B cell (primary cell): ENCODE measurements at regions of chr22 and their contacts with region 1.

Region 1: GRCh38 chr22:23838681-23839468 is at the start of gene DERL3:
- DNase-seq: peak; percentile 100
- ATAC-seq: peak; percentile 78
- H3K4me3 ChIP-seq: peak within 1 kb of the TSS; percentile 38 to 83 (median 69)
- H3K4me3 Mint-ChIP-seq: peak within 1 kb of the TSS; percentile 89
- H3K27ac ChIP-seq: peak within 1 kb of the TSS; percentile 98
- H3K27ac Mint-ChIP-seq: peak within 1 kb of the TSS; percentile 99
- H3K4me1 ChIP-seq: peaks cover 45 to 60% of the 10 kb centered on the region in 2 donors
- H3K4me1 Mint-ChIP-seq: peaks cover 73% of the 10 kb centered on the region
- H3K27me3 ChIP-seq: no peaks in the 10 kb centered on the region
- H3K27me3 Mint-ChIP-seq: no peaks in the 10 kb centered on the region
- CTCF ChIP-seq: no peak
- total RNA-seq, gene DERL3: 74.1 and 77.0 TPM in 2 replicates

Region 2: GRCh38 chr22:23750714-23751440 is 88.0 kb before region 1 on chr22 and contains the start of gene ZNF70:
- CTCF ChIA-PET with region 1: interaction called, 22 read pairs
- POLR2A ChIA-PET with region 1: interaction called, 39 read pairs
- intact Hi-C with region 1: loop called (anchors 1 kb)
- DNase-seq: peak; percentile 92
- ATAC-seq: peak; percentile 56
- H3K4me3 ChIP-seq: peak within 1 kb of the TSS; percentile 6 to 88 (median 83)
- H3K4me3 Mint-ChIP-seq: peak within 1 kb of the TSS; percentile 93
- H3K27ac ChIP-seq: peak within 1 kb of the TSS; percentile 85 to 98
- H3K27ac Mint-ChIP-seq: peak within 1 kb of the TSS; percentile 99
- H3K4me1 ChIP-seq: peaks cover 24 to 53% of the 10 kb centered on the region in 2 donors
- H3K4me1 Mint-ChIP-seq: peaks cover 55% of the 10 kb centered on the region
- H3K27me3 ChIP-seq: no peaks in the 10 kb centered on the region
- H3K27me3 Mint-ChIP-seq: no peaks in the 10 kb centered on the region
- CTCF ChIP-seq: no peak
- total RNA-seq, gene ZNF70: 8.3 and 9.6 TPM in 2 replicates

Region 3: DNA sequence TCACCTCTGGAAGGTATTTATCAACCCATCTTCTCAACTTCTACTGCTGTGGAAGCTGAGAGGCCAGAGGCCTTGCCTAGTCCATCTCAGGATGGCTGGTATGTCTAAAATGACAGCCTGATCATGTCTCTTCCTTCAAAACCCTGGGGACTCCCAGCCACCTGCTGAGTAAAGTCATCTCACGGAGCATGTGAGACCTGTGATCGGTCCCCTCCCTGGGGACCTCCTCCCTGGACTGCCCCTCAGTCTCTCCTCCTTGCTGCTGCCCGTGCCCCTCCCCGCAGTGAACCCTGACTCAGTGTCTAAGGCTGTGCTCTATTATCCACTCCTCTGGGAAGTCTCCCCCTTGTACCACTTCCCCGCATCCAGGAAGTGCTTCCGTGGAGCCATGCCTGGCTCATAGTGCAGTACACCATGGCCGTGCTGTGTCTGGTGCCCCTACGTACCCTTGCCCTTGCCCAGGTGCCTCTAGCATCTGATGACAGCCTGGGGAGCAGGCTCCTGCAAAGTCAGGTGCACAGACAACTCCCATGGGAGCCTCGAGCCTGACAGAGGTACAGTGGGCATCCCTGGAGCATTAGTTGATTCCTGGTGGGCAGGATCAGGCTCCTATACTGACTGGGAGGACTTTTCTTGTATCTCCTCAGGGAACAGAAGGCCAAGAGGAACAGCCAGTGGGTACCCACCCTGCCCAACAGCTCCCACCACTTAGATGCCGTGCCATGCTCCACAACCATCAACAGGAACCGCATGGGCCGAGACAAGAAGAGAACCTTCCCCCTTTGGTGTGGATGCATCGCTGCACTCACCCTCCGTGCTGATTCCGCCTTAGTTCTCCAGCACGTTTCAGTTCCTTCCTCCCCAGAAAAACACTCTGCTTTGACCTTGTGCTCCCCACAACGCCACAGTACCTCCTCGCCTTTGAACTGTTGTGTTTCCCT is 38.3 kb before region 1 on chr22:
- CTCF ChIA-PET with region 1: interaction called, 9 read pairs
- POLR2A ChIA-PET with region 1: interaction called, 18 read pairs
- intact Hi-C with region 1: loop called (anchors 1 kb)
- DNase-seq: peak; percentile 89
- ATAC-seq: peak; percentile 70
- H3K4me3 ChIP-seq: peak overlapping the region in 4 of 5 experiments; percentile 0 to 44 (median 4)
- H3K4me3 Mint-ChIP-seq: peak overlapping the region; percentile 81
- H3K27ac ChIP-seq: peak overlapping the region; percentile 92 to 93
- H3K27ac Mint-ChIP-seq: peak overlapping the region; percentile 96
- H3K4me1 ChIP-seq: peaks cover 63 to 76% of the 10 kb centered on the region in 2 donors
- H3K4me1 Mint-ChIP-seq: peaks cover 70% of the 10 kb centered on the region
- H3K27me3 ChIP-seq: no peaks in the 10 kb centered on the region
- H3K27me3 Mint-ChIP-seq: no peaks in the 10 kb centered on the region
- CTCF ChIP-seq: no peak

Region 4: DNA sequence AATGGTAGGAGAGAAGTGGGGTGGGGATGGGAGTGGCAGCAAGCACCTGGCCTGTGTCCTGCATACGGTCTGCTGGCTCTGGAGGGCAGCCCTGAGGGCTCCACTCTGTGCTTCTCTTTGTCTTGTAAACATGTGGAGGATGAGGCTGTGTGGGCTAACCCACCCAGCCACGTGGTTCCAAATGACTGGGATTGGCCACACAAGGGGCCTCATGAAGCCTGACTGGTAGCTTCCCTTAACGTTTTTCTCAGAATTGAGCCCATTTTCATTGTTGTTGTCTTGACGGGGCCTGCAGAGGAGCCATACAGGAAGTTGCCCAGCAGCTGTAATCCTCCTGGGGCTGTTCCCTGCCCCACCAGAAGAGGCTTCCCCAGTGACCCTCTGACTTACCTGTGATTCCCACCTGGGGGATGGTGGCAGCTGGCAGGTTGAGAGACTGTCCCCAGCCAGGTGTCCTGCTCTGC is 18.1 kb before region 1 on chr22:
- CTCF ChIA-PET with region 1: interaction called, 3 read pairs
- POLR2A ChIA-PET with region 1: interaction called, 8 read pairs
- intact Hi-C with region 1: loop called (anchors 2 kb)
- DNase-seq: peak; percentile 41
- ATAC-seq: peak; percentile 81
- H3K4me3 ChIP-seq: no peak overlapping the region
- H3K4me3 Mint-ChIP-seq: peak overlapping the region; percentile 68
- H3K27ac ChIP-seq: peak overlapping the region; percentile 60 to 68
- H3K27ac Mint-ChIP-seq: peak overlapping the region; percentile 93
- H3K4me1 ChIP-seq: peaks cover 43% of the 10 kb centered on the region in 2 donors
- H3K4me1 Mint-ChIP-seq: peaks cover 59% of the 10 kb centered on the region
- H3K27me3 ChIP-seq: no peaks in the 10 kb centered on the region
- H3K27me3 Mint-ChIP-seq: no peaks in the 10 kb centered on the region
- CTCF ChIP-seq: no peak

Region 5: GRCh38 chr22:23893943-23894709 is 55.3 kb after region 1 on chr22 and contains the start of gene MIF:
- CTCF ChIA-PET with region 1: no interaction called
- POLR2A ChIA-PET with region 1: interaction called, 3 read pairs
- intact Hi-C with region 1: loop called (anchors 1 kb)
- DNase-seq: peak; percentile 96
- ATAC-seq: peak; percentile 92
- H3K4me3 ChIP-seq: peak within 1 kb of the TSS; percentile 26 to 88 (median 84)
- H3K4me3 Mint-ChIP-seq: peak within 1 kb of the TSS; percentile 93
- H3K27ac ChIP-seq: peak within 1 kb of the TSS; percentile 87 to 89
- H3K27ac Mint-ChIP-seq: peak within 1 kb of the TSS; percentile 98
- H3K4me1 ChIP-seq: peaks cover 13 to 19% of the 10 kb centered on the region in 2 donors
- H3K4me1 Mint-ChIP-seq: peaks cover 28% of the 10 kb centered on the region
- H3K27me3 ChIP-seq: no peaks in the 10 kb centered on the region
- H3K27me3 Mint-ChIP-seq: no peaks in the 10 kb centered on the region
- CTCF ChIP-seq: peak; percentile 76
- total RNA-seq, gene MIF: 125 and 143 TPM in 2 replicates